Mucosa of descending colon (tissue), 3 donors: ENCODE measurements at regions of chr18 and their contacts with region 1.

Region 1: GRCh38 chr18:58314284-58314683 is 270.3 kb downstream of the NEDD4L start:
- DNase-seq: no peak
- ATAC-seq: peak; percentile 33
- H3K4me3 ChIP-seq: no peak overlapping the region
- H3K4me1 ChIP-seq: peaks cover 44% of the 10 kb centered on the region
- CTCF ChIP-seq: no peak

Region 2: GRCh38 chr18:58241877-58242276 is 72.4 kb before region 1 on chr18:
- intact Hi-C with region 1: loop called in 1 of 2 experiments (anchors 10 kb)
- DNase-seq: peak in 1 of 3 donors; percentile 10
- ATAC-seq: peak; percentile 18
- H3K4me3 ChIP-seq: no peak overlapping the region
- H3K4me1 ChIP-seq: peaks cover 21% of the 10 kb centered on the region
- CTCF ChIP-seq: no peak

Region 3: DNA sequence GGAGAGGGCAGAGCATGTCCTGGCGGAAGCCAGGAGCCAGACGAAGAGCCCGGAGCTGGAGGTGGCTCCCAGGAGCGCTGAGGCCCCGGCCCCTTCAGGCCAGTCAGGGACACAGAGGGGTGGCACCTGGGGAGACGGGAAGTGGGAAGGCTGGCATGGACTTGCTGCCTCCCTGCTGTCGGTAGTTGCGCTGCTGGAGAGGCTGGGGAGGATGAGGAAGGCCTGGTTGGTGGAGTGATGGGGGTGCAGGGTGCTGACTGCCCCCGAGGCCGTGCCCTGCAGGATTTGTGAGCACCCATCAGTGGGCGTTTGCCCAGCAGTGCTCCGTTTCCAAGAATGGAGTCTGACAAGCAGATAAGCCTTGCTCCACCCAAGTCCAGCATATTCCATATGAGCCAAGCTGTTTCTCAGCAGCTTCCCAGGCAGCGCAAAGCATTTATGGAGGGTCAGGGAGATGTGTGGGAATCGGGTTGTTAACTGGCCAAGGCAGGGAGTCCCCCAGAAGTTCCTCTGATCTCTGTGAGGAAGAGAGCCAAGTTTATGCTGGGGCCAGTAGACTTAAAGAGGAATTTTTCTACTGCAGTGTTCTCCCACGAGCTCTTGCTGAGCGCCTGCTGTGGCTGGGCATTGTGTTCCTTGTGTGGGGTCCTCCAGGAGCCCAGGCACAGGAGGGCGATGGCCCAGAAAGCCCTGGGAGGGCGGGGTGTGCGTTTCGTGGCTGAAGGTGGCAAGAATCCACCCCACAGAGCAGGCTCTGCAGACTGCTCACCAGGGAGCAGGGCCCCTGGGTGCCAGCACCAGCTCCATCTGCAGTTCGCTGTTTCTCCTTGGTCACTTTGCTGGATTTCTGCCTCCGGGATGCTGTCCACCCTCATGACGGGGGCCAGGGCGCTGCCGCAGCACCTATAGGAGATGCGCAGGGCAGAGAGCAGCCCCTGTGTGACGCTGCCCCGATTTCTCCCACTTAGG is 64.4 kb after region 1 on chr18:
- intact Hi-C with region 1: no loop called
- DNase-seq: no peak
- ATAC-seq: no peak
- H3K4me3 ChIP-seq: no peak overlapping the region
- H3K4me1 ChIP-seq: no peaks in the 10 kb centered on the region
- CTCF ChIP-seq: no peak